Activated CD4-positive, alpha-beta T cell treated with anti-CD3 and anti-CD28 coated beads for 36 hours (primary cell): ENCODE measurements at regions of chr3 and their contacts with region 1.

Region 1: GRCh38 chr3:150546226-150547044 is at the starts of genes EIF2A and SERP1:
- DNase-seq: peak; percentile 99
- ATAC-seq: peak; percentile 92
- H3K4me3 Mint-ChIP-seq: peak within 1 kb of the TSS; percentile 90
- H3K27ac Mint-ChIP-seq: peak within 1 kb of the TSS; percentile 96
- H3K4me1 Mint-ChIP-seq: peaks cover 68% of the 10 kb centered on the region
- H3K27me3 Mint-ChIP-seq: no peaks in the 10 kb centered on the region
- total RNA-seq, gene EIF2A: 119 to 182 TPM
- total RNA-seq, gene SERP1: 84.6 to 96.1 TPM

Region 2: DNA sequence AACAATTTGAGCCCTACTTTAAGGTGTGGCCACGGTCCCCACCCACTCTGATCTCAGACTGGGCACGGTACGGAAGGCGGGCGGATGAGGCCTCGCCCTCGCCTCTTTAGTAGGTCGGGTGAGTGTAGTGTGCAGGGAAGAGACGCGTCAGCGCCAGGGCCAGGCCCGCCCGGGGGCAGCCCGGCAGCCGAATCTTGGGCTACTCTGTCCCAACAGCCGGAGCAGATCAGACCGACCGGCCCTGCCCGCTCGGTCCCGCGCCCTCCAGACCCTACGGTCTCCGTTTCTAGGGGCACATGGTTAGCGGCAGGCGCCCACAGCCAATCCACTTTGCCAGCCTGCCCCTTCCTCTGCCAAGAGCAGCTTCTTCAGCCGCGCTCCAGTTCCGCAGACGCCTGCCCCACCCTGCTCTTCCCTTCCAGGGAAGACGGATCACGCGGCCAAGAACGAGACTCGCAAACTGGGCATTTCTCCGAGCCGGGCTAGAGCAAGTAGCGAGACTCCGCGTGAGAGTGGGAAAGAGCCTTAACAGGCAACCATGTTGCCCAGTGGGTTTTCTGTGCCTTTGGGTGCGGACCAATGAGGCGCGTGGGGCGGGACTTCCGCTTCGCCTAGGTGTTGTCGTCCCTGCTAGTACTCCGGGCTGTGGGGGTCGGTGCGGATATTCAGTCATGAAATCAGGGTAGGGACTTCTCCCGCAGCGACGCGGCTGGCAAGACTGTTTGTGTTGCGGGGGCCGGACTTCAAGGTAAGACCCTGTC is 733.6 kb before region 1 on chr3 and contains the start of gene RNF13:
- CTCF ChIA-PET with region 1: no interaction called
- POLR2A ChIA-PET with region 1: no interaction called
- intact Hi-C with region 1: loop called (anchors 2 kb)
- DNase-seq: peak; percentile 96
- ATAC-seq: peak; percentile 95
- H3K4me3 Mint-ChIP-seq: peak within 1 kb of the TSS; percentile 95
- H3K27ac Mint-ChIP-seq: peak within 1 kb of the TSS; percentile 100
- H3K4me1 Mint-ChIP-seq: peaks cover 46% of the 10 kb centered on the region
- H3K27me3 Mint-ChIP-seq: peaks cover 3% of the 10 kb centered on the region
- total RNA-seq, gene RNF13: 28.8 to 41.2 TPM

Region 3: DNA sequence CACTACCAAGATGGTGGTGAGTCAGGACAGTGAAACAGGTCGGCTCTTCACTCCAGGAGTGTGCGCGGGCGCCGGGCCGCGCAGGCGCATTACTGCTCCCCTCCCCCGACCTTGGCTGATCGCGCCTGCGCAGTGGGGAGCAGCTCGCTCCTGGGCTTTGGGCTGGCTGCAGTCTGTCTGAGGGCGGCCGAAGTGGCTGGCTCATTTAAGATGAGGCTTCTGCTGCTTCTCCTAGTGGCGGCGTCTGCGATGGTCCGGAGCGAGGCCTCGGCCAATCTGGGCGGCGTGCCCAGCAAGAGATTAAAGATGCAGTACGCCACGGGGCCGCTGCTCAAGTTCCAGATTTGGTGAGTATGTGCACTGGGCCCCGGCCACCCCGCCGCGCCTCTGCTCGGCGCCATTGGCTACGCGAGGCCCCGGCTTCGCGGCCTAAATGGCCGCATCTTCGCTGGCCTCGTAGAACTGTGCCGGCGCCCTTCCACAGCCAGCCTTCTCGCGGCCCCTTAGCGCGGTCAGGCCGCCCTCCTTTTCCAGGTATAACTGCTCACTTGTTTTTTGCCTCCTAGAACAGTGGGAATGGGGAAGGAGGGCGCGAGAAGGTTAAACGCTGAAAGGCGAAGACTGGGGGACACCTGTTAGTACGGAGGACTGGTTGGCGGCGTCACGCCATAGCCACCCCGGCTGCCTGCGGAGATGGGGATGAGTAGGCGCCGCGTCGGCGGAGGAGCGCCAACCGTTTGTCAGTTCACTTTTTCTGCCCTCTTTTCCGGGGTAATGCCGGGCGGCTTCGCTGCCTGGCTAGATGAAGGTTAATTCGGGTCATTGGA is 56.9 kb after region 1 on chr3 and contains the start of gene SELENOT:
- CTCF ChIA-PET with region 1: interaction called, 6 read pairs
- POLR2A ChIA-PET with region 1: interaction called, 8 read pairs
- intact Hi-C with region 1: loop called (anchors 1 kb)
- DNase-seq: peak; percentile 96
- ATAC-seq: peak; percentile 91
- H3K4me3 Mint-ChIP-seq: peak within 1 kb of the TSS; percentile 97
- H3K27ac Mint-ChIP-seq: peak within 1 kb of the TSS; percentile 98
- H3K4me1 Mint-ChIP-seq: peaks cover 68% of the 10 kb centered on the region
- H3K27me3 Mint-ChIP-seq: no peaks in the 10 kb centered on the region
- total RNA-seq, gene SELENOT: 88.6 to 134 TPM

Region 4: GRCh38 chr3:150737874-150738713 is 191.7 kb after region 1 on chr3:
- CTCF ChIA-PET with region 1: interaction called, 4 read pairs
- POLR2A ChIA-PET with region 1: interaction called, 4 read pairs
- intact Hi-C with region 1: loop called in 1 of 2 experiments (anchors 1 kb)
- DNase-seq: peak; percentile 77
- ATAC-seq: peak; percentile 73
- H3K4me3 Mint-ChIP-seq: peak overlapping the region; percentile 40
- H3K27ac Mint-ChIP-seq: peak overlapping the region; percentile 93
- H3K4me1 Mint-ChIP-seq: peaks cover 72% of the 10 kb centered on the region
- H3K27me3 Mint-ChIP-seq: no peaks in the 10 kb centered on the region

Region 5: DNA sequence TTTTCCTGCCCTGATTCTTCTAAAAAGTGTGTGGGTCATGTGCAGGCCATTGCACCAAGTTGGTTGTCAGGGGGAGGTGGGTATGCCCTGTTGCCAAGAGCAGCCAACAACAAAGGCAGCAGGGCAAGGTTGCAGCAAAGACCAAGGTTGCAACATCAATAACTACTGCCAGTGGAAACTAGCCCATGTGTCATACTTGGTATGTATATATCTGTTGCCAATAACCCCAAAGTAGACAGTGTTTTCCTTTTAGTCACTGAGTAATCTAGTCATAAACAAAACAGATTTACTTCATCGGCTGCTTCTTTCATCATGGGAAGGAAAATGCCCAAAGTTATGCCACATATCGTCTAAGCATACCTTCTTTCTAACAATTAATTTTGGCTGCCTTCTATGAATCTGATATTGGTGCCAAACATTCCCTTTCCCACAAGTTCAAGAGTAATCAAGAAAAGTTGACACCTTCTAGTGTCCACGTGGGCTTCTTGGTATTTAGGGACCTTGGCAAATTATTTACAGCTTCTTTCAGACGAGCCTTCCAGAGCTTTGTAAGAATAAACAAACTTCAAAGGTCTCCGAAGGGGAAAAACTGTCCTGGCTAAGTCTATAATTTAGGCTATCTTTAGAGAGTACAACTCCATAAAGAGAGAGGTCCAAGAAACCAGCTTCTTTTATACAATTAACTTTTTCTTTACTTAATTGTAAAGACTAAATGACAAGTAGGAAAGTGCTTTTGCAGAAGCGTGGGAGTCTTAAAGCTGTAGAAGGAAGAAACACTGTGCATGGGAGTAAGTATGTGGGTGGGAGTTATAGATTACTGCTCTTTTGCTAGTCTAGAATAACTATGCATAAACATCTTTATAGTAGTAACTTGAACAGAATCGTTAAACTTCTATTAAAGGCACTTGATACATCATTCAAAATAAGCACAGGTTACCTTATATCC is 1712.3 kb after region 1 on chr3:
- CTCF ChIA-PET with region 1: no interaction called
- POLR2A ChIA-PET with region 1: no interaction called
- intact Hi-C with region 1: loop called in 1 of 2 experiments (anchors 5 kb)
- DNase-seq: peak; percentile 82
- ATAC-seq: peak; percentile 81
- H3K4me3 Mint-ChIP-seq: peak overlapping the region; percentile 61
- H3K27ac Mint-ChIP-seq: peak overlapping the region; percentile 91
- H3K4me1 Mint-ChIP-seq: peaks cover 90% of the 10 kb centered on the region
- H3K27me3 Mint-ChIP-seq: no peaks in the 10 kb centered on the region